AG04449 (cell line): ENCODE measurements at regions of chr2 and their contacts with region 1.

Region 1: GRCh38 chr2:181070119-181070835 is 89.9 kb downstream of the UBE2E3 start:
- DNase-seq: no peak
- H3K4me3 ChIP-seq: no peak overlapping the region
- CTCF ChIP-seq: no peak

Region 2: DNA sequence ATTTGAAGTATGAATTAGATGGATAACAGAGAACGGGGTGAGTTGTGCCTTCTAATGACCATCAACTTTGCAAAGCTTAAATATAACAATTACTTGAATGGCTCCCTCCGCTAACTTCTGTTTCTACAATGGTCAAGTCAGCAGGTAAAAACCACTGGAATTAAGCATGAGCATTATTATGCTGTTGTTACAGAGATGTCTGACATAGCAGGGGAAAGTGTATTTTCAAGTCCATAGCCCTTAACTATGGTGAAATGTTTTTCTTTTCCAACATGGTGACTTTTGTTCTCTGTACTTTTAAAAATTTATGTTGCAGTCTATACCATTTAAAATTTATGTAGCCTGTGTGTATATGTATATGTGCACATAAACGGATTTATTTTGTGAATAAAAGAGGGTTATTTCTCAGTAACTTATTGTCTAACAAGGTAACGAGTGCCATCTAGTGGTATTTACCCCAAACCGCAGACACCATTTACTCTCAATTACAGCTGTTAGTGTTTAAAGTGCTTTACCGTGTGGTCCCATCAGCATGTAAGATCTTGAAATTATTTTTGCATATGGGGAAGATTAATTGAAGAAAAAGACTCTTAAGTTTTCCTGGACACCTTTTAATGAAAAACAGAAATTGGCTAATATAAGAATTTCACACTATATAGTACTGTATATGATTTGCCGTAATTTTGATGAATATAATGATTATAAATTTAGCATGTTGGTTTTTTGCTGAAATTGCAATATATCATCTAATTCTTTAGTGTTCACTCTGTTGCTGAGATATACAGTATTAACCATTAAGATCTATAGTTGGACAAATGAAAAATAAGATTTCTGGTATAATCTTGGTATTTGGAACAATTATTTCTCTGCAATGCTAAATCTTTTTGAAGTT is 11.7 kb before region 1 on chr2:
- CTCF ChIA-PET with region 1: interaction called, 24 read pairs
- POLR2A ChIA-PET with region 1: no interaction called
- DNase-seq: no peak
- H3K4me3 ChIP-seq: no peak overlapping the region
- CTCF ChIP-seq: peak; percentile 22

Region 3: GRCh38 chr2:181235683-181236459 is 165.6 kb after region 1 on chr2:
- CTCF ChIA-PET with region 1: no interaction called
- POLR2A ChIA-PET with region 1: no interaction called
- DNase-seq: no peak
- H3K4me3 ChIP-seq: no peak overlapping the region
- CTCF ChIP-seq: no peak

Region 4: DNA sequence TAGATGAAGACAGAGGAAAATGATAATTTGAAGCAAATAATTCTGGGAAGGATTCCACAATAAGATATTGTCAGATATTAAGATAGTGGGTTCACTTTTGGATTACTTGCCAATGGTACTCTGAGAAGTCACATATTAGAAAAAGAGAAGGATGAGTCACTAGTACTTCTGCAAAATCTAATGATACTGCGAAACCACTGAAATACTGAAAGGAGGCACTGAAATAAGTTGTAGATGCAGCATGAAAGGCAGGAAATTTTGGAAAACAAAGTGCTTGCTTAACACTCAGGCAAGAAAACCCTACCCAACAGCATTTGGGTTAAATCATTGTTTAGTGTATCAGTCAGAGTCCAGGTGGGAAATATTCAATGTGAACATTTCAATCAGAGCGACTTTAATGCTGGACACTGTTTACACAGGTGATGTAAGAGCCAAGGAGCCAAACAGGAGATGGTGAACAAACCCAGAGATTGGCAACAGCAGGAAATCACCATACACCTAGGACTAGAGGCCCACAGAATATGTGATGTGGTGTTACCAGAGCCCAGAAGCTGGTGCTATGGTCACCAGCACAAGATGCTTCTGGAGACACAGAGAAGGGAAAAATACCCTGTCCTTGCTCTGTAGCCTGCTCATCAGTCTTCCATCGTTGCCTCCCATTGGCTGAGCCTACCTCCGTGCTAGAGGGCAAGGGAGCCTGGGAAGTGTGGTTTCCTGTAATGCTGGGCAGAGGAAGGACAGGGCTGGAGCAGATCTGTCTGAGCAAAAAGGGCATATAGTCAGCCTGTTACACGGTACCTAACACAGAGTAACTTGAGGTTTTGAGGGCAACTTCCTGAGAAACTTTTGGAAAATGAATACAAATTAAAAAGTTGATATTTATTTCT is 182.2 kb after region 1 on chr2:
- CTCF ChIA-PET with region 1: no interaction called
- POLR2A ChIA-PET with region 1: no interaction called
- DNase-seq: no peak
- H3K4me3 ChIP-seq: no peak overlapping the region
- CTCF ChIP-seq: no peak